ENCODE measurements at regions of chr4 and their contacts with region 1.

Region 1: DNA sequence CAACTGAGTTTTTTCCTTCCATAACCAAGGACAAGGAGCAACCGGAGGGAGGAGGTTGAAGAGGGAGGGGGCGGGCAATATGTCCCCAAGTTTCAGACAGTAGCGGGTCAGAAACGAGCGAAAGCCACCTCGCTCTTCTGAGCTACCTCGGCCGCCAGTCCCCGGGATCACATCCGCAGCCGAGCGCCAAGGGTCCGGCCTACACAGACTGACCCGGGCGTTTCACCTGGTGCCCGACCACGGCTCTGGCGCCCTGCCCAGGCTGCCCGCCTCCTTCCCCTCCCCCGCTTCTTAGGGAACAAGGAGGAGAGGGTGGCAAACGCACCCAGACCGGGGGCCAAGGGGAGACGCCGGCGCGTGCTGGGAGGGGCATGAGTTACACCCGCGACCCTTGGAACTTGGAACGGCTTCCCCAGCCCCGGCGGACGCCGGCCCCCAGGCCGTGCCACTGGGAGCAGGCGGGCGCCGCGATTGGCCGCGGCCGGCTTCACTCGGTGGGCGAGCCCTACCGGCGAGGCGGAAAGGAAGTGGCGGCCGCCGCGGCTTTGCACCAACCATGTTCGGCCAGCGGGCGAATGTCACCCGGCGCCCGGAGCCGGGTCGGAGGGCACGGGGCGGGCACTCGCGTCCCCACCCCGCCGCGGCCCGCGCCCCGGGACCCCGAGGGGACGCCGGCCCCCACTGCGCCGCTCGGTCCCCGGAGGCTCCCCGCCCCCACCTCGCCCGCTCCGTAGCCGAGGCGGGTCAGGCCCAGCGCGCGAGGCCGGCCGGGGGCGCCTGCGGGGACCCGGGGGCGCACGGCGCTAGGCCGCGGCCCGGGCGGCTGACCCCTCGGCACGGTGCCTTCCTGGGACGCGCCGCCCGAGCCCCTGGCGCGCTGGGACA is 1.5 kb downstream of the IRF2 start:
- DNase-seq: peak; percentile 59 to 76
- H3K4me3 ChIP-seq: peak overlapping the region; percentile 79 to 98 (median 88)
- H3K27ac ChIP-seq: peak overlapping the region; percentile 96 to 99
- H3K4me1 ChIP-seq: peaks cover 2 to 13% of the 10 kb centered on the region in 2 donors
- H3K27me3 ChIP-seq: no peaks in the 10 kb centered on the region
- CTCF ChIP-seq: peak in 1 of 3 donors; percentile 29
- POLR2A ChIP-seq: no peak

Region 2: GRCh38 chr4:184457535-184458249 is 15.2 kb before region 1 on chr4:
- intact Hi-C with region 1: no loop called
- DNase-seq: no peak
- H3K4me3 ChIP-seq: no peak overlapping the region
- H3K27ac ChIP-seq: no peak overlapping the region
- H3K4me1 ChIP-seq: peaks cover 0 to 13% of the 10 kb centered on the region in 2 donors
- H3K27me3 ChIP-seq: no peaks in the 10 kb centered on the region
- CTCF ChIP-seq: no peak
- POLR2A ChIP-seq: no peak

Region 3: GRCh38 chr4:184537269-184538022 is 64.6 kb after region 1 on chr4:
- intact Hi-C with region 1: loop called (anchors 2 kb)
- DNase-seq: peak; percentile 94 to 95
- H3K4me3 ChIP-seq: peak overlapping the region; percentile 56 to 87 (median 73)
- H3K27ac ChIP-seq: peak overlapping the region; percentile 94 to 98
- H3K4me1 ChIP-seq: peaks cover 0 to 5% of the 10 kb centered on the region in 2 donors
- H3K27me3 ChIP-seq: no peaks in the 10 kb centered on the region
- CTCF ChIP-seq: no peak
- POLR2A ChIP-seq: peak; percentile 96

Measured in breast epithelium (tissue), 4 donors.